ENCODE measurements at regions of chr1 and their contacts with region 1.

Region 1: DNA sequence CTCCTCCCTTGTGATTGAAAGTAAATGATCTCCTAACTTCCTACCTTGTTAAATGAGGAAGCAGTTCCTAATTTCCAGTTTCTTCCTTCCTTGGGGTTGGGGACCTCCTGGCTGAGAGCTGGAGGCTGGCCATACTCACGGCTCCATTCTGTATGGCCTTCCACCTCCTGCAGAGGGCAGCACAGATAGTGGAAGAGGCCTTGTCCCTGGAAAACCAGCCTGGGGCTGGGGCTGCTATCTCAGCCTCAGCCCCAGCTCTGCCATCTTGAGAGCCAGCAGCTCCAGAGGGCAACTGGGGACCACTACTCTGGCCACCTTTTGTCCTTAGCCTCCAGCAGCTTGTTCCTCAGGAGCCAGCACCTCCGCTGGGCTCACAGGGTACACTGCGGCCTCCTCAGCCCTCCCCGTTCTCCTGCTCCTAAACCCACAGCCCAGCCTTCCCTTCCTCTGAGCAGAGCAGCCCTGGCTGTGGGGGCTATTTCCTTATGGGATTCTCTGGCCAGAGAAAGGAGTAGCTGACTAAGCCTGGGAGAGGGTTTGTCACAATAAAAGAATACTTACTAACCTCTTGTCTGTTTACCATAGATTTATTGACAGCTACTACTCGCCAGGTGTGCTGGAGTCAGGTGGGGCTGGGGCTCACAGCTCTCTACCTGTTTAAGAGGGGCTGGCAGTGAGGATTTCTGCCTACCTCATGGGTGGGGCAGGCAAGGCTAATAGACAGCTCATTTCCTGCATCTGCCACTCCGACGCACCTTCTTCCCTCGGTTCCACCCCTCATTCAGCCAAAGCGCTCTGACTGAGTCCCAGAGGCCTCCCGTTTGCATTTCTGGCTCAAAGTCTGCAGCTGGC is 6.3 kb downstream of the TMEM234 start:
- DNase-seq: peak; percentile 70
- ATAC-seq: peak; percentile 81
- H3K4me3 ChIP-seq: no peak overlapping the region
- H3K4me3 Mint-ChIP-seq: no peak overlapping the region
- H3K27ac ChIP-seq: no peak overlapping the region
- H3K27ac Mint-ChIP-seq: no peak overlapping the region
- H3K4me1 ChIP-seq: peaks cover 6 to 12% of the 10 kb centered on the region in 2 donors
- H3K4me1 Mint-ChIP-seq: peaks cover 13% of the 10 kb centered on the region
- H3K27me3 ChIP-seq: no peaks in the 10 kb centered on the region
- H3K27me3 Mint-ChIP-seq: no peaks in the 10 kb centered on the region
- CTCF ChIP-seq: peak; percentile 78

Region 2: DNA sequence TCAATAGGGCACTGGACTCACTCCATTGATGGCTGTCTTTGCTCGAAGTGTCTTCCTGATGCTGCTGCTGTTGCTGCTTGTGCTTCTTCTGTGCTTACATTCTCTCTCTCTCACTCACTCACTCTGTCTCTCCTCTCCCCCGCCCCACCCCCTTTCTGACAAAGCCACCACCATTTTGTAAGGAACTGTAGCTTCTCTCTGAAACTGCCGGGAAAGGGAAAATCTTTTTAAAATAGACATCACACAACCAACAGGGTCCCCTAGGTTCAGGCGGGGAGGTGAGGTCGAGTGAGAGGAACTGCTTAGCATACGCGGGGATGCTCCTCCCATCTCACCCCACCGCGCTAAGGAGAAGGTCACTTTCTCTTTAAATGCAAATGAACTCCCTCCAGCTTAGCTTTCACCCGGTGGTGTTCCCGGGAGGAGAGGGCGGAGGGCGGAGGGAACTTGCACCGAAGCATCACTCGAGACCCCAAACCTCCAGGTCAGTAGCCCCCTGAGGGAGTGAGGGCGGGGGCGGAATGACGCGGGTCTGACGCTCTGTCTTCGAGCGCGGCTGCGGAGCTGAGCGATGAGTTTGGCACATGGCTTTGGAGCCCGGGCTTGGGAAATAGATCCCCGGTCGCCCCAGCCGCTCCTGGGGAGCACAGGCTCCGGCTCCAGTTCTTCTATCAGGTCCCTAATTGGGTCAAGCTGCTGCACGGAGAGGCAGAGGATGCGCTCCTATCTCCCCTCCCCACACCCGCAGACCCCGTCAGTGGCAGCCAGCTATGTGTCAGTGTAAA is 15.4 kb before region 1 on chr1 and contains the start of gene CCDC28B:
- CTCF ChIA-PET with region 1: interaction called, 20 read pairs
- POLR2A ChIA-PET with region 1: interaction called, 5 read pairs
- intact Hi-C with region 1: no loop called
- DNase-seq: peak; percentile 77
- ATAC-seq: peak; percentile 58
- H3K4me3 ChIP-seq: peak within 1 kb of the TSS; percentile 48 to 85 (median 79)
- H3K4me3 Mint-ChIP-seq: peak within 1 kb of the TSS; percentile 88
- H3K27ac ChIP-seq: peak within 1 kb of the TSS; percentile 78 to 88
- H3K27ac Mint-ChIP-seq: peak within 1 kb of the TSS; percentile 86
- H3K4me1 ChIP-seq: peaks cover 17 to 36% of the 10 kb centered on the region in 2 donors
- H3K4me1 Mint-ChIP-seq: peaks cover 33% of the 10 kb centered on the region
- H3K27me3 ChIP-seq: no peaks in the 10 kb centered on the region
- H3K27me3 Mint-ChIP-seq: no peaks in the 10 kb centered on the region
- CTCF ChIP-seq: no peak
- total RNA-seq, gene CCDC28B: 7.8 and 10.2 TPM in 2 replicates

Region 3: GRCh38 chr1:32228771-32229170 is 12.9 kb after region 1 on chr1:
- CTCF ChIA-PET with region 1: interaction called, 14 read pairs
- POLR2A ChIA-PET with region 1: no interaction called
- intact Hi-C with region 1: no loop called
- DNase-seq: no peak
- ATAC-seq: no peak
- H3K4me3 ChIP-seq: no peak overlapping the region
- H3K4me3 Mint-ChIP-seq: no peak overlapping the region
- H3K27ac ChIP-seq: no peak overlapping the region
- H3K27ac Mint-ChIP-seq: no peak overlapping the region
- H3K4me1 ChIP-seq: peaks cover 2 to 3% of the 10 kb centered on the region in 2 donors
- H3K4me1 Mint-ChIP-seq: peaks cover 8% of the 10 kb centered on the region
- H3K27me3 ChIP-seq: no peaks in the 10 kb centered on the region
- H3K27me3 Mint-ChIP-seq: no peaks in the 10 kb centered on the region
- CTCF ChIP-seq: no peak

Region 4: DNA sequence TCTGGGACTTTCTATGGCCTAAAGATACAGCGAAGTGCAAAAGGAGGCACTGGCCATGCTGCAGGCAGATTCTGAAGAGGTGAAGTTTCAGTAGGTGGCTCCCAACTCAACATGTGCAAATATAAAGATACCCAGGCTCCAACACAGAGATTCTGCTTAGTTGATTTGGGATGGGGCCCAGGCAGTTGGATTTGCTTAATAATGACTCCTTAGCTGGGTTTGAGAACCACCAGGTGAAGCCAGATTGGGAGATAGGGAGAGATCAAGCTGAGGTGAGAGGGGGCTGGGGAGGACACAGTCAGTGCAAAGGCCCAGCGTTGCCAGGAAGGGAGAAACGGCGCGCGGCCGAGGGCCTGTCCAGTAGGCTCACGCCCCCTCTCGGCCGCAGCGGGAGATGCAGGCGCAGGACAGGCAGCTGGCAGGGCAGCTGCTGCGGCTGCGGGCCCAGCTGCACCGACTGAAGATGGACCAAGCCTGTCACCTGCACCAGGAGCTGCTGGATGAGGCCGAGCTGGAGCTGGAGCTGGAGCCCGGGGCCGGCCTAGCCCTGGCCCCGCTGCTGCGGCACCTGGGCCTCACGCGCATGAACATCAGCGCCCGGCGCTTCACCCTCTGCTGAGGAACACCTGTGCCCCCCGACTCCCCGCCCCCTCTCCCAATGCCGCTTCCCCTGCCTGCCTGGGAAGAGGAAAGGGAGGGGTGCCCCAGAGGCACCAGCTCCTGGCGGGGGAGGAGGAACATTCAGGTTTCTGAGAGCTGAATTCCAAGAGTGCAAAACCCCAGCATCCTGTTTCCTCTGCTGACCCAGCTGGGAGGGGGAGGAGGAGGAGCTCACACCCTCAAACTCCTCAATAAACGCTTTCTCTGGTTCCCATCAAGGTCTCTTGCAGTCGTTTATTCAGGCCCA is 32.4 kb after region 1 on chr1:
- CTCF ChIA-PET with region 1: interaction called, 49 read pairs
- POLR2A ChIA-PET with region 1: interaction called, 5 read pairs
- intact Hi-C with region 1: no loop called
- DNase-seq: peak; percentile 77
- ATAC-seq: peak; percentile 11
- H3K4me3 ChIP-seq: peak overlapping the region in 3 of 5 experiments; percentile 7 to 56 (median 29)
- H3K4me3 Mint-ChIP-seq: peak overlapping the region; percentile 68
- H3K27ac ChIP-seq: peak overlapping the region; percentile 94 to 95
- H3K27ac Mint-ChIP-seq: peak overlapping the region; percentile 84
- H3K4me1 ChIP-seq: peaks cover 72 to 73% of the 10 kb centered on the region in 2 donors
- H3K4me1 Mint-ChIP-seq: peaks cover 64% of the 10 kb centered on the region
- H3K27me3 ChIP-seq: no peaks in the 10 kb centered on the region
- H3K27me3 Mint-ChIP-seq: no peaks in the 10 kb centered on the region
- CTCF ChIP-seq: peak; percentile 90

Region 5: GRCh38 chr1:32321712-32322291 is 105.9 kb after region 1 on chr1:
- CTCF ChIA-PET with region 1: interaction called, 38 read pairs
- POLR2A ChIA-PET with region 1: interaction called, 4 read pairs
- intact Hi-C with region 1: no loop called
- DNase-seq: no peak
- ATAC-seq: peak; percentile 35
- H3K4me3 ChIP-seq: peak overlapping the region in 3 of 5 experiments; percentile 5 to 34 (median 12)
- H3K4me3 Mint-ChIP-seq: peak overlapping the region; percentile 80
- H3K27ac ChIP-seq: peak overlapping the region; percentile 59 to 63
- H3K27ac Mint-ChIP-seq: peak overlapping the region; percentile 89
- H3K4me1 ChIP-seq: peaks cover 70 to 78% of the 10 kb centered on the region in 2 donors
- H3K4me1 Mint-ChIP-seq: peaks cover 57% of the 10 kb centered on the region
- H3K27me3 ChIP-seq: no peaks in the 10 kb centered on the region
- H3K27me3 Mint-ChIP-seq: no peaks in the 10 kb centered on the region
- CTCF ChIP-seq: no peak

Region 6: GRCh38 chr1:32372149-32372756 is 156.4 kb after region 1 on chr1:
- CTCF ChIA-PET with region 1: interaction called, 13 read pairs
- POLR2A ChIA-PET with region 1: no interaction called
- intact Hi-C with region 1: no loop called
- DNase-seq: peak; percentile 66
- ATAC-seq: peak; percentile 75
- H3K4me3 ChIP-seq: no peak overlapping the region
- H3K4me3 Mint-ChIP-seq: no peak overlapping the region
- H3K27ac ChIP-seq: no peak overlapping the region
- H3K27ac Mint-ChIP-seq: no peak overlapping the region
- H3K4me1 ChIP-seq: peaks cover 10 to 13% of the 10 kb centered on the region in 2 donors
- H3K4me1 Mint-ChIP-seq: peaks cover 12% of the 10 kb centered on the region
- H3K27me3 ChIP-seq: no peaks in the 10 kb centered on the region
- H3K27me3 Mint-ChIP-seq: no peaks in the 10 kb centered on the region
- CTCF ChIP-seq: no peak

Region 7: DNA sequence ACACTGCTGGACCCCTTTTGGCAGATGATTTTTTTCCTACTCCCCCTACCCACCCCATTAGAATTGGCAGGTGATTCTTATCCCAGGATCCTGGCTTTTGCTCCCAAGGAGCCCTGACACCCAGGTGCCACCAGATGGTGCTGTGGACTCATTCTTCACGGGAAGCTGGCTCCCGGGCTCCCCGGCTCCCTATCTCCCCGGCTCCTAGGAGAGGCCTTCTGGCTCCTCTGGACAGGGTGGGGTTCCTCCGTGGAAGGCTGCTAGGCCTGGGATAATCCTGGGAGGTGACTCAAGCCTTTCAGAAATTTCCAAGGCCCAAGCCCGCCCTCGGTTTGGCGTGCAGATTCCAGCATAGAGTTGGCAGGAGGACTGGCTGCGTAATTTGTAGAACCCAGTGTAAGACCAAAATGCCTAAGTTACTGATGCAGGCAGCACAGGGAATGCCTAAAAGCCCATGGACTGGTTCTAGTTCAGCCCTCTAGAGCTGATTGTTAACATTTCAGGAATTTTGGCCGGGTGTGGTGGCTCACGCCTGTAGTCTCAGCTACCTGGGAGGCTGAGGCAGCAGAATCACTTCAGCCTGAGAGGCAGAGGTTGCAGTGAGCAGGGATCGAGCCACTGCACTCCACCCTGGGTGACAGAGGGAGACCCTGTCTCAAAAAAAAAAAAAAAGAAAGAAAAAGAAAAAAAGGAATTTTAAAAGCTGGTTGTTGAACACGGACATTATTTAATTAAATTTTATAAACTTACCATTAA is 185.2 kb after region 1 on chr1:
- CTCF ChIA-PET with region 1: interaction called, 14 read pairs
- POLR2A ChIA-PET with region 1: no interaction called
- intact Hi-C with region 1: no loop called
- DNase-seq: peak; percentile 64
- ATAC-seq: peak; percentile 69
- H3K4me3 ChIP-seq: no peak overlapping the region
- H3K4me3 Mint-ChIP-seq: peak overlapping the region; percentile 13
- H3K27ac ChIP-seq: no peak overlapping the region
- H3K27ac Mint-ChIP-seq: no peak overlapping the region
- H3K4me1 ChIP-seq: peaks cover 0 to 3% of the 10 kb centered on the region in 2 donors
- H3K4me1 Mint-ChIP-seq: peaks cover 2% of the 10 kb centered on the region
- H3K27me3 ChIP-seq: no peaks in the 10 kb centered on the region
- H3K27me3 Mint-ChIP-seq: peaks cover 3% of the 10 kb centered on the region
- CTCF ChIP-seq: peak; percentile 79

Measured in B cell (primary cell).